Activated B cell treated with CpG ODN at 0.5 μM for 24 hours (primary cell): ENCODE measurements at regions of chr2 and their contacts with region 1.

Region 1: GRCh38 chr2:74391580-74392448 is 11.7 kb upstream of the DCTN1 start:
- DNase-seq: peak; percentile 94
- ATAC-seq: peak; percentile 89
- H3K4me3 Mint-ChIP-seq: peak overlapping the region; percentile 96
- H3K27ac Mint-ChIP-seq: peak overlapping the region; percentile 99
- H3K4me1 Mint-ChIP-seq: peaks cover 6% of the 10 kb centered on the region
- H3K27me3 Mint-ChIP-seq: peaks cover 4% of the 10 kb centered on the region
- CTCF ChIP-seq: peak; percentile 93

Region 2: GRCh38 chr2:73736855-73737779 is 654.7 kb before region 1 on chr2 and contains the start of gene TPRKB:
- CTCF ChIA-PET with region 1: no interaction called
- POLR2A ChIA-PET with region 1: no interaction called
- intact Hi-C with region 1: loop called (anchors 2 kb)
- DNase-seq: peak; percentile 85
- ATAC-seq: peak; percentile 98
- H3K4me3 Mint-ChIP-seq: peak within 1 kb of the TSS; percentile 94
- H3K27ac Mint-ChIP-seq: peak within 1 kb of the TSS; percentile 90
- H3K4me1 Mint-ChIP-seq: peaks cover 18% of the 10 kb centered on the region
- H3K27me3 Mint-ChIP-seq: no peaks in the 10 kb centered on the region
- CTCF ChIP-seq: no peak
- total RNA-seq, gene TPRKB: 26.9 and 27.1 TPM in 2 replicates

Region 3: GRCh38 chr2:74250189-74250631 is 141.6 kb before region 1 on chr2:
- CTCF ChIA-PET with region 1: interaction called, 4 read pairs
- POLR2A ChIA-PET with region 1: no interaction called
- intact Hi-C with region 1: loop called (anchors 1 kb)
- DNase-seq: peak; percentile 43
- ATAC-seq: peak; percentile 64
- H3K4me3 Mint-ChIP-seq: no peak overlapping the region
- H3K27ac Mint-ChIP-seq: no peak overlapping the region
- H3K4me1 Mint-ChIP-seq: peaks cover 2% of the 10 kb centered on the region
- H3K27me3 Mint-ChIP-seq: no peaks in the 10 kb centered on the region
- CTCF ChIP-seq: no peak

Region 4: GRCh38 chr2:74414881-74415761 is 23.3 kb after region 1 on chr2:
- CTCF ChIA-PET with region 1: interaction called, 14 read pairs
- POLR2A ChIA-PET with region 1: interaction called, 6 read pairs
- intact Hi-C with region 1: no loop called
- DNase-seq: peak; percentile 62
- ATAC-seq: peak; percentile 78
- H3K4me3 Mint-ChIP-seq: peak overlapping the region; percentile 80
- H3K27ac Mint-ChIP-seq: peak overlapping the region; percentile 74
- H3K4me1 Mint-ChIP-seq: peaks cover 53% of the 10 kb centered on the region
- H3K27me3 Mint-ChIP-seq: no peaks in the 10 kb centered on the region
- CTCF ChIP-seq: no peak

Region 5: GRCh38 chr2:74421221-74421870 is 29.5 kb after region 1 on chr2 and contains the starts of genes C2orf81 and WDR54:
- CTCF ChIA-PET with region 1: interaction called, 3 read pairs
- POLR2A ChIA-PET with region 1: interaction called, 6 read pairs
- intact Hi-C with region 1: loop called (anchors 1 kb)
- DNase-seq: peak; percentile 97
- ATAC-seq: peak; percentile 88
- H3K4me3 Mint-ChIP-seq: peak within 1 kb of the TSS; percentile 99
- H3K27ac Mint-ChIP-seq: peak within 1 kb of the TSS; percentile 96
- H3K4me1 Mint-ChIP-seq: peaks cover 44% of the 10 kb centered on the region
- H3K27me3 Mint-ChIP-seq: no peaks in the 10 kb centered on the region
- CTCF ChIP-seq: no peak
- total RNA-seq, gene C2orf81: 3.9 and 5.5 TPM in 2 replicates
- total RNA-seq, gene WDR54: 32.3 and 33.5 TPM in 2 replicates

Region 6: DNA sequence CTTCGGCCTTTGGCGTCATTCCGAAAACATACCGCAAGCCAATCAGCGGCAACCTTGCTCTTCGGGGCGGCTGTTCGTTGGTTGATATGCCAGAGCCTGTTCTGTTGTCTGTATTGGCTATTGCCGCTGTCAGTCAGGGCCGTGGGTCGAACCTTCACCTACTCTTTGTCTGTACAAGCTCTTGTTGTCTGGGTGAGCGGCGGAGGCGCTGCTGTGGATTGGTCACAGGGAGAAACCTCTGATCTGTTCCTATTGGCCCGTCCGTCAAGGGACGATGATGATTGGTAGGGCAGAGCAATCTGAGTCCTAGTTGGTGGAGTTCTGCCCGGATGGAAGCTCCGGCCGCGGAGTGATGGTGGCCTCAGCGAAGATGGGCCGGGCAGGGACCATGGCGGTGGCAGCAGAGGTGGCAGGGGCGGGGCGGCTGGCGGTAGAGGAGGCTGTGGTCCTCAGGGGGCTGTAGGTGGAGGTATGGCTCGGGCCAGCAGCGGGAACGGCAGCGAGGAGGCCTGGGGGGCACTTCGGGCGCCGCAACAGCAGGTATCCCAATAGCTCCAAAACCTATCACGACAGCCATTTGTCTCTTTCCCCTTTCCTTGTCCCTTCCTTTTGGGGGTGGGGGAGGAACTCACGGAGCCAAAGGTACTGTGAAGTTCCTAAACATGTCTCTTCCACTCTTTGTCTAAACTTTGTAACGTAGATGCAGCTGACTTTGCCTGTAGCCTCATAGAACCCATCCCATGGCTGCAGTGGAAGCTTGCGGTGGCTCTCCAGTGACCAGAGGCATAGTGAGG is 66.5 kb after region 1 on chr2 and contains the start of gene WBP1:
- CTCF ChIA-PET with region 1: no interaction called
- POLR2A ChIA-PET with region 1: interaction called, 18 read pairs
- intact Hi-C with region 1: loop called (anchors 1 kb)
- DNase-seq: peak; percentile 87
- ATAC-seq: peak; percentile 81
- H3K4me3 Mint-ChIP-seq: peak within 1 kb of the TSS; percentile 99
- H3K27ac Mint-ChIP-seq: peak within 1 kb of the TSS; percentile 100
- H3K4me1 Mint-ChIP-seq: peaks cover 62% of the 10 kb centered on the region
- H3K27me3 Mint-ChIP-seq: no peaks in the 10 kb centered on the region
- CTCF ChIP-seq: no peak
- total RNA-seq, gene WBP1: 61.4 and 65.3 TPM in 2 replicates

Region 7: DNA sequence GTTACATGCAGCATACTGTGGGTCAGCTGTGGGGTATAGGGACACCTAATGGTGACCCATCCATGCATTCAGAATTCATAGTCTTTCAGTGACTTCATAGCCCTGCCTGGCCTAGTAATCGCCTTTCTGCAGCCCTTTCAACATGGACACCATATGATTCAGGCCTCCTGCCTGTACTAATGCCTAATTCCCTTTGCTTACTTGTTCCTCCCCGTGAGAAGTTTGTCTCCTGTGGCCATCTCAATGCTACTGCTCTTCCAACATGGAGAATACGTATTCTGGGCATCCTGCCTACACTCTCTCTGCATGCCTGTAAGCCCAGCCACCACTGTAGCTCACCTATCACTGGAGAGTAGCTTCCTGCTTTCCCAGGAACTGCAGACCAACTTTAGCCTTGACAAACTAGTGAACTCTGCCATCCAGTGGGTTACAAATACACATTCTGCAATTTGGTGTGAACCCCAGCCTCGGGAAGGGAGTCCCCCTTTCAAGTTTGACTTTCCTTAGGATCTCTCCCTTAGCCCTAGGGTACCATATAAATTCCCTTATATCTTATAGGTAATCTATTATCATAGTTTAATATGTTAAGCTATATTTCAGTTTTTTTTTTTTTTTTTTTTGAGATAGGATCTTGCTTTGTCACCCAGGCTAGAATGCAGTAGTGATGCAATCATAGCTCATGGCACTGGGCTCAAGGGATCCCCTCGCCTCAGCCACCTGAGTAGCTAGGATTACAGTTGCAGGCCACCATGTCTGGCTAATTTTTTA is 234.0 kb after region 1 on chr2:
- CTCF ChIA-PET with region 1: no interaction called
- POLR2A ChIA-PET with region 1: no interaction called
- intact Hi-C with region 1: no loop called
- DNase-seq: no peak
- ATAC-seq: no peak
- H3K4me3 Mint-ChIP-seq: no peak overlapping the region
- H3K27ac Mint-ChIP-seq: no peak overlapping the region
- H3K4me1 Mint-ChIP-seq: no peaks in the 10 kb centered on the region
- H3K27me3 Mint-ChIP-seq: no peaks in the 10 kb centered on the region
- CTCF ChIP-seq: no peak